A673 (cell line): ENCODE measurements at regions of chr3 and their contacts with region 1.

Region 1: DNA sequence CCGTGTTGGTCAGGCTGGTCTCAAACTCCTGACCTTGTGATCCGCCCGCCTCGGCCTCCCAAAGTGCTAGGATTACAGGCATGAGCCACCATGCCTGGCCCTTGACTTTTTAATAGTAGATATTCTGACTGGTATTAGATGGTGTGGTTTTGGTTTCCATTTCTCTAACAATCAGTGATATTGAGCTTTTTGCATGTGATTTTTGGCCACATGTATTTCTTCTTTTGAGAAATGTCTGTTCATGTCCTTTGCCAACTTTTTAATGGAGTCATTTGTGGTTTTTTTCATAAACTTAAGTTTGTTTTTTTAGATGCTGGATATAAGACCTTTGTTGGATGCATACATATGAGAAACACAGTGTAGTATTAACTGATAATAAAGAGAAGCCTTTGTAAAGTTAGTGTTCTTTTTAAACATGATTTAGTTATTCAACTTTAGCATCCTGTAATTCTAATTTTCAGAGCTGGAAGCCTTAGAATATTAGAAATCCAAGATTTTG is 280.8 kb downstream of the RBMS3 start:
- DNase-seq: no peak
- H3K4me3 ChIP-seq: no peak overlapping the region
- H3K27ac ChIP-seq: no peak overlapping the region
- H3K4me1 ChIP-seq: peaks cover 14% of the 10 kb centered on the region
- H3K27me3 ChIP-seq: no peaks in the 10 kb centered on the region
- CTCF ChIP-seq: no peak

Region 2: GRCh38 chr3:29536016-29536758 is 25.5 kb before region 1 on chr3:
- CTCF ChIA-PET with region 1: no interaction called
- POLR2A ChIA-PET with region 1: interaction called, 19 read pairs
- intact Hi-C with region 1: no loop called
- DNase-seq: no peak
- H3K4me3 ChIP-seq: no peak overlapping the region
- H3K27ac ChIP-seq: no peak overlapping the region
- H3K4me1 ChIP-seq: peaks cover 15% of the 10 kb centered on the region
- H3K27me3 ChIP-seq: no peaks in the 10 kb centered on the region
- CTCF ChIP-seq: no peak

Region 3: DNA sequence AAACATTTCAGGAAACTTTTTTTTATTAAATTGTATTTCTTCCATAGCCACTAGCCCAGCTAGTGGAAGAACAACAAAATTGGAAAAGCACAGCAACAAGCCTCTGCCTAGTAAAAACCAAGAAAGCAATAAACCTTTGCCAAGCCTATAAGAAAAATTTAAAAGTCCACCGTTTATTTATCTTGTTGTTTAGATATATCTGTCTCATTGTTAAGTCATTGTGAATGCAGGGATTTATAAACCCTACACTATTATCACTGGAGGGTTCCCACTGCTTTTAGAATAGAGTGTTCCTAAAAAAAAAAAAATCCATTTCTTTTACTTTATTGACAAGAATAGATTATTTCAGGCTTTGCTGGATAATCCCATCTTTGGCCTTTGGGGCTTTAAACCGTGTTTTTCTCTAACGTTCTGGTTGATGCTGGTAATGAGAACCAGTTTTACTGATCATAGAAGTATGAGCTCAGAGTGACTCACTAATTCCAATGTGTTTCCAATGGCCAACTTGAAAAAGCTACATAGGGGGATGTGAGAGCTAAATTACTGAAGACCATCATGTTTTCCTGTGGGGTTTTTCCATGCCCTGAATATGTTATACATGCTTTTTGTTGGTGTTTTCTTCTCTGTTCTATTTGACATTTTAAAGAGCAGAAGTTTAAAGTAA is 353.3 kb after region 1 on chr3:
- CTCF ChIA-PET with region 1: no interaction called
- POLR2A ChIA-PET with region 1: no interaction called
- intact Hi-C with region 1: no loop called
- DNase-seq: peak; percentile 18
- H3K4me3 ChIP-seq: no peak overlapping the region
- H3K27ac ChIP-seq: no peak overlapping the region
- H3K4me1 ChIP-seq: no peaks in the 10 kb centered on the region
- H3K27me3 ChIP-seq: no peaks in the 10 kb centered on the region
- CTCF ChIP-seq: no peak